Left cardiac atrium (tissue), 4 donors: ENCODE measurements at regions of chr1 and their contacts with region 1.

Region 1: GRCh38 chr1:68120136-68120791 is 69.8 kb upstream of the DIRAS3 start:
- DNase-seq: no peak
- ATAC-seq: peak; percentile 62 to 70

Region 2: GRCh38 chr1:68321084-68321685 is 200.9 kb after region 1 on chr1:
- intact Hi-C with region 1: loop called (anchors 2 to 5 kb)
- DNase-seq: peak; percentile 74
- ATAC-seq: peak; percentile 94 to 96

Region 3: DNA sequence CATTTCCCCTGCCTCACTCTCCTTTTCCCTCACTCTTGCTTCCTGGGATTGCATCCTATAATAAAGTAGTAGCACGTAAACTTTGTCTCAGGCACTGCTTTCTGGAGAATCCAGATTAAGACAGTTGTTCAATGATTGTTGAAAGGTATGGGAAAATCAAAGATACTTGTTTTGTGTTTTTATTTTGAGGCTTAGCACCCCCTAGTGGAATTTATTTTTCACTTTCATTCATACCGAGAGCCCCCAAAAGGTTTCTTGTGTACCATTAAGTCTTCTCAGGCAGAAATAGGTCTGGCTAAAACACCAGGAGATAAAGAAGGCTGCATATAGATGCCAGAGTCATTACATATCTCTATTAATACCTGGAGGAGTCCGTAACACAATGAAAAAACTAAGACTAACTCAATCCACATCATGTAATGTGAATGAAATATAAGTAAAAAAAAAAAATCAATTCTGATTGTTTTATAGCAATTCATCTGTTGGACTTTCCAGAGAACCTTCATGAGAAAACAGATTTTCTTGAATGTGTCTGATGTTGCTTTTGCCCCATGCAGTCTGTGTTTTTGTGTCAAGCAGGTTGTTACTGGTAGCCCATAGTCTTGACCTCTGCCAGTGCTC is 226.0 kb after region 1 on chr1:
- intact Hi-C with region 1: loop called (anchors 1 to 5 kb)
- DNase-seq: no peak
- ATAC-seq: no peak

Region 4: GRCh38 chr1:68442822-68443556 is 322.7 kb after region 1 on chr1:
- intact Hi-C with region 1: loop called in 1 of 2 experiments (anchors 5 kb)
- DNase-seq: no peak
- ATAC-seq: peak in 1 of 2 donors; percentile 67